Activated CD4-positive, alpha-beta T cell treated with anti-CD3 and anti-CD28 coated beads for 36 hours (primary cell): ENCODE measurements at regions of chr6 and their contacts with region 1.

Region 1: DNA sequence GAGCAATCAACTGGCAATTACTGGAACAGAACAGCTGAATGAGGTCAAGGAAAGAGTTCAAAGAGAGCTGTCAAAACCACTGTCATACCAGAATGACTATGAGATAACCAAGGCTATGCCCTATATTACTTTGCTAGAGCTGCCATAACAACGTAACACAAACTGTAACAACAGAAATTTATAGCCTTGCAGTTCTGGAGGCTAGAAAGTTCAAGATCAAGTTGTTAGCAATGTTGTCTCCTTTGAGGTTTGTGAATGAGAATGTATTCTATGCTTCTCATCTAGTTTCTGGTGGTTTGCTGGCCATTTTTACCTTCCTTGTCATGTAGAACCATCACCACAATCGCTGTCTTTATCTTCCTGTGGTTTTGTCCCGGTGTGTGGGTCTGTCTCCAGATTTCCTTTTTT is 1323.0 kb upstream of the GJE1 start:
- DNase-seq: peak; percentile 10
- ATAC-seq: peak; percentile 94
- H3K4me3 Mint-ChIP-seq: no peak overlapping the region
- H3K27ac Mint-ChIP-seq: no peak overlapping the region
- H3K4me1 Mint-ChIP-seq: peaks cover 12% of the 10 kb centered on the region
- H3K27me3 Mint-ChIP-seq: peaks cover 10% of the 10 kb centered on the region

Region 2: GRCh38 chr6:140586426-140587061 is 223.2 kb before region 1 on chr6:
- CTCF ChIA-PET with region 1: no interaction called
- POLR2A ChIA-PET with region 1: no interaction called
- intact Hi-C with region 1: loop called (anchors 1 to 2 kb)
- DNase-seq: peak; percentile 57
- ATAC-seq: peak; percentile 90
- H3K4me3 Mint-ChIP-seq: no peak overlapping the region
- H3K27ac Mint-ChIP-seq: peak overlapping the region; percentile 60
- H3K4me1 Mint-ChIP-seq: peaks cover 13% of the 10 kb centered on the region
- H3K27me3 Mint-ChIP-seq: peaks cover 4% of the 10 kb centered on the region

Region 3: GRCh38 chr6:140774080-140774505 is 35.6 kb before region 1 on chr6:
- CTCF ChIA-PET with region 1: interaction called, 4 read pairs
- POLR2A ChIA-PET with region 1: no interaction called
- intact Hi-C with region 1: loop called (anchors 1 to 2 kb)
- DNase-seq: no peak
- ATAC-seq: peak; percentile 92
- H3K4me3 Mint-ChIP-seq: no peak overlapping the region
- H3K27ac Mint-ChIP-seq: no peak overlapping the region
- H3K4me1 Mint-ChIP-seq: peaks cover 9% of the 10 kb centered on the region
- H3K27me3 Mint-ChIP-seq: peaks cover 21% of the 10 kb centered on the region